MCF 10A (cell line): ENCODE measurements at regions of chr14 and their contacts with region 1.

Region 1: GRCh38 chr14:92135267-92135666 is 13.5 kb downstream of the CPSF2 start:
- DNase-seq: peak; percentile 38
- H3K4me3 Mint-ChIP-seq: no peak overlapping the region
- H3K27ac Mint-ChIP-seq: no peak overlapping the region
- H3K4me1 Mint-ChIP-seq: no peaks in the 10 kb centered on the region
- H3K27me3 Mint-ChIP-seq: no peaks in the 10 kb centered on the region
- CTCF ChIP-seq: peak; percentile 40

Region 2: DNA sequence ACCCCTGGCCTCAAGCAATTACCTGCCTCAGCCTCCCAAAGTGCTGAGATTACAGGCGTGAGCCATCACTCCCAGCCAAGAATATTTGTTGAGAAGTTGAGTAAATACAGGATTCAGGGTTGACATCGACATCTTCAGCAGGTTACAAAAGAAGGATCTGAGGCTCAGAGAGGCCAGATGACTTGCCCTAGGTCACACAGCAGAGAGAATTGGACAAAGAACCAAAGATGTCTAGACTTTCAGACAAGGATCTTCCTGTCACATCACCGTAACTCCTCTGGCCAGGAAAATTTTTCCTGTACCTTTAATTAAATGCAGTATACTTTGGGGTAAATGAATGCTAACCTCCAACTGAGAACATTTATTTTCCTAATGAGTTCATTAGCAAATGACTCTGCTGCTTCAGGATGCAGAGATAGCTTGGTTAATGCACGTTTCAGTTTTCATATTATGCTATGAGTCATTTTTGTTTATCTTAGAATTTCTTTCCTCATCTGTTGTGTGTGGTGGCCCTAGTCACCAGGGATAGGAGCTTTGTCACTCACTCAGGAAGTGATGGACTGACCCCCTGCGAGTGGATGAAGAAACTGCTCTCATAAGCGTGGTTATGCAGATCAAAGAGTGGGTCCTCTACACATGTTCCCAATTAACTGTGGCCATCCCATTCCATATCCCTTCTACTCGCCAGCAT is 276.9 kb before region 1 on chr14:
- CTCF ChIA-PET with region 1: no interaction called
- POLR2A ChIA-PET with region 1: no interaction called
- intact Hi-C with region 1: no loop called
- DNase-seq: peak; percentile 53
- H3K4me3 Mint-ChIP-seq: no peak overlapping the region
- H3K27ac Mint-ChIP-seq: no peak overlapping the region
- H3K4me1 Mint-ChIP-seq: no peaks in the 10 kb centered on the region
- H3K27me3 Mint-ChIP-seq: peaks cover 42% of the 10 kb centered on the region
- CTCF ChIP-seq: no peak

Region 3: DNA sequence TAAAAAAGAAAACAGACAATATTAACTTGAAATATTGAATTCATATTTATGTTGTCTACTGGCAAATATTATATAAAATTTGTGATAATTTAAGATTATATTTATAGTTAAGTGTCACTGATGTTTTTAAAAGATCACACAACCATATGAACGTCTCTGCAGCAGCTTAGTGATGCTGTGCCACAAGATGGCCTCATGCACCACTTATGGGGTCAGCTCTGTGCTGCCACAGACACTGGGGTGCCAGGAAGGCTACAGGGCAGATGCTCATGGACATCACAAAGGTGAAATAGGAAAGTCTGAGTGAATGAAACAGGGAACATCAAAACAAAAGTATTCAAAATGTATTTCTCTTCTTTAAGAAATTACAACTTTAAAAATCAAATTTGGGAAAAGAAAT is 41.9 kb before region 1 on chr14:
- CTCF ChIA-PET with region 1: no interaction called
- POLR2A ChIA-PET with region 1: no interaction called
- intact Hi-C with region 1: no loop called
- DNase-seq: no peak
- H3K4me3 Mint-ChIP-seq: no peak overlapping the region
- H3K27ac Mint-ChIP-seq: no peak overlapping the region
- H3K4me1 Mint-ChIP-seq: no peaks in the 10 kb centered on the region
- H3K27me3 Mint-ChIP-seq: no peaks in the 10 kb centered on the region
- CTCF ChIP-seq: no peak

Region 4: GRCh38 chr14:92121670-92122350 is 13.5 kb before region 1 on chr14 and contains the starts of genes CPSF2 and NDUFB1:
- CTCF ChIA-PET with region 1: interaction called, 4 read pairs
- POLR2A ChIA-PET with region 1: interaction called, 45 read pairs
- intact Hi-C with region 1: no loop called
- DNase-seq: peak; percentile 79
- H3K4me3 Mint-ChIP-seq: peak within 1 kb of the TSS; percentile 82
- H3K27ac Mint-ChIP-seq: peak within 1 kb of the TSS; percentile 99
- H3K4me1 Mint-ChIP-seq: peaks cover 18% of the 10 kb centered on the region
- H3K27me3 Mint-ChIP-seq: no peaks in the 10 kb centered on the region
- CTCF ChIP-seq: no peak
- total RNA-seq, gene CPSF2: 116 and 121 TPM in 2 replicates
- total RNA-seq, gene NDUFB1: 130 and 134 TPM in 2 replicates

Region 5: GRCh38 chr14:92456215-92457015 is 321.1 kb after region 1 on chr14:
- CTCF ChIA-PET with region 1: interaction called, 7 read pairs
- POLR2A ChIA-PET with region 1: no interaction called
- intact Hi-C with region 1: loop called (anchors 1 kb)
- DNase-seq: peak; percentile 63
- H3K4me3 Mint-ChIP-seq: no peak overlapping the region
- H3K27ac Mint-ChIP-seq: no peak overlapping the region
- H3K4me1 Mint-ChIP-seq: no peaks in the 10 kb centered on the region
- H3K27me3 Mint-ChIP-seq: no peaks in the 10 kb centered on the region
- CTCF ChIP-seq: peak; percentile 50

Region 6: GRCh38 chr14:92603309-92604242 is 468.3 kb after region 1 on chr14:
- CTCF ChIA-PET with region 1: interaction called, 5 read pairs
- POLR2A ChIA-PET with region 1: no interaction called
- intact Hi-C with region 1: loop called (anchors 5 kb)
- DNase-seq: peak; percentile 45
- H3K4me3 Mint-ChIP-seq: no peak overlapping the region
- H3K27ac Mint-ChIP-seq: no peak overlapping the region
- H3K4me1 Mint-ChIP-seq: peaks cover 32% of the 10 kb centered on the region
- H3K27me3 Mint-ChIP-seq: no peaks in the 10 kb centered on the region
- CTCF ChIP-seq: peak; percentile 30

Region 7: GRCh38 chr14:92680781-92681650 is 545.7 kb after region 1 on chr14:
- CTCF ChIA-PET with region 1: interaction called, 11 read pairs
- POLR2A ChIA-PET with region 1: no interaction called
- intact Hi-C with region 1: loop called (anchors 1 kb)
- DNase-seq: peak; percentile 77
- H3K4me3 Mint-ChIP-seq: no peak overlapping the region
- H3K27ac Mint-ChIP-seq: no peak overlapping the region
- H3K4me1 Mint-ChIP-seq: peaks cover 5% of the 10 kb centered on the region
- H3K27me3 Mint-ChIP-seq: no peaks in the 10 kb centered on the region
- CTCF ChIP-seq: peak; percentile 95

Region 8: GRCh38 chr14:92686900-92687444 is 551.7 kb after region 1 on chr14:
- CTCF ChIA-PET with region 1: interaction called, 37 read pairs
- POLR2A ChIA-PET with region 1: no interaction called
- intact Hi-C with region 1: no loop called
- DNase-seq: peak; percentile 48
- H3K4me3 Mint-ChIP-seq: no peak overlapping the region
- H3K27ac Mint-ChIP-seq: no peak overlapping the region
- H3K4me1 Mint-ChIP-seq: no peaks in the 10 kb centered on the region
- H3K27me3 Mint-ChIP-seq: no peaks in the 10 kb centered on the region
- CTCF ChIP-seq: peak; percentile 91